PC-3 (cell line): ENCODE measurements at regions of chr12 and their contacts with region 1.

Region 1: GRCh38 chr12:60967128-60967527 is 1293.1 kb upstream of the USP15 start:
- DNase-seq: no peak
- ATAC-seq: no peak
- H3K4me3 ChIP-seq: no peak overlapping the region
- H3K27ac ChIP-seq: no peak overlapping the region
- H3K4me1 ChIP-seq: no peaks in the 10 kb centered on the region
- H3K27me3 ChIP-seq: no peaks in the 10 kb centered on the region
- CTCF ChIP-seq: no peak

Region 2: GRCh38 chr12:60849723-60850122 is 117.4 kb before region 1 on chr12:
- CTCF ChIA-PET with region 1: no interaction called
- POLR2A ChIA-PET with region 1: no interaction called
- intact Hi-C with region 1: no loop called
- DNase-seq: peak; percentile 4
- ATAC-seq: no peak
- H3K4me3 ChIP-seq: no peak overlapping the region
- H3K27ac ChIP-seq: no peak overlapping the region
- H3K4me1 ChIP-seq: no peaks in the 10 kb centered on the region
- H3K27me3 ChIP-seq: no peaks in the 10 kb centered on the region
- CTCF ChIP-seq: no peak

Region 3: GRCh38 chr12:60935983-60936761 is 31.0 kb before region 1 on chr12:
- CTCF ChIA-PET with region 1: no interaction called
- POLR2A ChIA-PET with region 1: no interaction called
- intact Hi-C with region 1: no loop called
- DNase-seq: peak; percentile 8
- ATAC-seq: 0 out of 2 replicates have a peak, but pooled peaks have one; percentile 24
- H3K4me3 ChIP-seq: no peak overlapping the region
- H3K27ac ChIP-seq: no peak overlapping the region
- H3K4me1 ChIP-seq: no peaks in the 10 kb centered on the region
- H3K27me3 ChIP-seq: no peaks in the 10 kb centered on the region
- CTCF ChIP-seq: peak; percentile 42

Region 4: GRCh38 chr12:61018571-61018970 is 51.4 kb after region 1 on chr12:
- CTCF ChIA-PET with region 1: no interaction called
- POLR2A ChIA-PET with region 1: no interaction called
- intact Hi-C with region 1: no loop called
- DNase-seq: no peak
- ATAC-seq: no peak
- H3K4me3 ChIP-seq: no peak overlapping the region
- H3K27ac ChIP-seq: no peak overlapping the region
- H3K4me1 ChIP-seq: no peaks in the 10 kb centered on the region
- H3K27me3 ChIP-seq: no peaks in the 10 kb centered on the region
- CTCF ChIP-seq: no peak

Region 5: DNA sequence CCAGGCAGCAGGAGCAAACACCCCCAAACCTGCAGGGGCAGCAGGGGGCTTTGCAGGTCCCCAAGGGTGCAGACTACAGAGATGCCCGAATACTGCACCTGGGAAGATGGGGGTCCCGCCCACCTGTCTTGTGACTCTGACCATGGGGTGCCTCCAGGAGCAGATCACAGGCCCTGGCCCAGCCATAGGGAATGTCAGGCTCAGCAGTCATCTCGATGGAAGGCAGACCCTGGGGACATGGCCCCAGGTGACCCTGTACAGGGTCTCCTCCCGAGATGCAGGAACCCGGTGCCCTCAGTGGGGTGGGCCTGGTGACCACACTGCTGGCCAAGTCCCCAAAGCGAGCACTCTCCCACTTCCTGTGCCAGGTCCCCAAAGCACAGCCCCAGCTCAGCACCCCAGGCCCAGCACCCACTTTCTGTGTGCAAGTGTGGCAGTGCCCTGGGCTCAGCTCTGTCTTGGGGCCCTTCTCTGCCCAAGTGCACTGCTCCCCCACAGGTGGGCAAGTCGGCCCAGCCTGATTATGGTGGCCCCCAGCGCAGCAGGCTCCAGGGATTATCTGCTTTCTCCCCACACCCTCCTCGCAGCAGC is 389.4 kb after region 1 on chr12:
- CTCF ChIA-PET with region 1: interaction called, 13 read pairs
- POLR2A ChIA-PET with region 1: no interaction called
- intact Hi-C with region 1: no loop called
- DNase-seq: no peak
- ATAC-seq: no peak
- H3K4me3 ChIP-seq: no peak overlapping the region
- H3K27ac ChIP-seq: no peak overlapping the region
- H3K4me1 ChIP-seq: no peaks in the 10 kb centered on the region
- H3K27me3 ChIP-seq: no peaks in the 10 kb centered on the region
- CTCF ChIP-seq: no peak